ENCODE measurements at regions of chr12 and their contacts with region 1.

Region 1: GRCh38 chr12:124224535-124225110 is 70.3 kb upstream of the RFLNA start:
- DNase-seq: no peak

Region 2: DNA sequence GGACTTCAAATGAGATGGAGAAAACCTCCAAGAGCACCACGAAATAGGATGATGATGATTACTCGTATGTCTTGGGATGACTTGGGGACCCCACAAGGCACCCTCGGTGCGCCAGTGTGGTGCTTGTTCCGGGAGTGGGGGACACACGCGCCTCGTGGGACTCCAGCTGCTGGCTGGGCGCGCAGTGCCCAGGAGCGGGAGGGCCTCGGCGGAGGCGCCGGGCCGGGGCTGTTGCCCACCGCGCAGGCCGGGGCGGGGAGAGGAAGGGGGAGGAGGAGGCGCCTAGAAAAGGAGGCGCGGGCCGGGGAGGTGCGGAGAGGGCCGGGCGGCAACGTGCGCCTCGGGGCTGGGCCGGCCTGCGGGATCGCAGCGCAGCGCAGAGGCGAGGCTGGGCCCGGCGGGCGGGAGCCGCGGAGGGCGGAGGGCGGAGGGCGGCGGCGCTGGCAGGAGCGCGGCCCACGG is 70.2 kb after region 1 on chr12 and contains the start of gene RFLNA:
- intact Hi-C with region 1: no loop called
- DNase-seq: peak; percentile 73
- total RNA-seq, gene RFLNA: 0.97 to 1.2 TPM

Region 3: GRCh38 chr12:124779161-124780141 is 554.8 kb after region 1 on chr12:
- intact Hi-C with region 1: loop called in 1 of 2 experiments (anchors 5 kb)
- DNase-seq: no peak

Region 4: DNA sequence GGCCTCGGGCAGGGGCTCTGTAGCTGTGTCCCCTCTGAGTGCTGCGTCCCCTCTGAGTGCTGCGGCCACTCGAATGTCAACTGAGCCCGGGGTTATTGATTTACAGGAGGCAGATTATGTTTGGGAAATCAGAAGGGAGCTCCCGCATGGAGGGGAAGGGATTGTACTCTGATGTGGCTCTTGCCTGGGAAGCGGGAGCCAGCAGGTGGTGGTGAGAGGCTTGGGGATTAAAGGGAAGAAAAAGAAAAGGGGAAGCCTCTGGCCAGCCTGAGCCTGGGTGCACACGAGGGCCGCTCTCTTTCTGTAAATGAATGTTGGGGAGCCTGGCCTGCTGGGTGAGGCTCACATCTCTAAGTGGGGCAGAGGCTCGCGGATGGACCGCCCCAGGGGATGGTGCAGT is 984.3 kb after region 1 on chr12:
- intact Hi-C with region 1: loop called in 1 of 2 experiments (anchors 5 kb)
- DNase-seq: no peak